Ascending aorta (tissue), 2 donors: ENCODE measurements at regions of chr1 and their contacts with region 1.

Region 1: DNA sequence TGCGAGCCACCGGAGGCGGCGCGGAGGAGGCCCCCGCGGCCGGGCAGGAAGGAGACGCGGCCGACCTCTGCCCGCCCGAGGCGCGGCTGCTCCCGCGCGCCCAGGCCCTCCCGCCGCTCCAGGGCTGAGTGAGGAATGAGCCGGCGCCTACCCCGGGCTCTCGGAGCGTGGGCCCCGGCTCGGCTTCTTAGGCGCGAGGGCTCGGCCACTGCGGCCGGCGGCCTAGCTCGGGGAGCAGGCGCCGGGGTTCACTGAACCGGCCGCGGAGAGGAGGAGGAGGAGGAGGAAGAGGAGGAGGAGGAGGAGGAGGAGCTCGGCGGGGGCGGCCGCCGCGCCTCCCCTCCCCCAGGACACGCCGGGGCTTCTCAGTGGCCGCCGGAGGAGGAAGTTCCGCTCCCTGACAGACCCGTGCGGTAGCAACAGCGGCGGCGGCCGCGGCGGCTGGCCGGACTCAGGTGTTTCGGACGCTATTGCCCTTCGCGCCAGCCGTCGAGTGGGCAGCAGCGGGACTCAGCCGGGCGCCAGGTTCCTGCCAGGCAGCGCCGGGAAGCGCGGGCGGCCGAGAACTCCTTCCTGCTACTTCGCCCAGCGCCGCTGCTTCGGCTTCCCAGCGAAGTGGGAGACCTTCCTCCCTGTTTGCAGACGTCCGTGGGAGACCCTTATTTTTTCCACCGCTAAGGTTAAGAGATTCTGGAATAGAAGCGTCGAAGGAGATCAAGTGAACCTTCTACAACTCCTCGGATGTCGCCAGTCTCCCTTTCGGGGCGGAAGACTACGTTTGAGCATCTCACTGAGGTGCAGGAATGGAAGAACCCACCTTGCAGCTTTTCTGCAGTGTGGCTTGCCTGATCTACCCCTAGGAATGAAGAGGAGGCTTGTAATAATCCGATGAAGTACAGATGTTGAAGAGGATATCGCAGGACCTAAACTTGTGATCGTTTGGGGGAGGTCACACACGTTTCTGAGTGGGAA is at the start of gene MAN1A2:
- DNase-seq: peak; percentile 59 to 91
- H3K4me3 ChIP-seq: peak within 1 kb of the TSS; percentile 84 to 86
- H3K27ac ChIP-seq: peak within 1 kb of the TSS; percentile 97 to 98
- H3K4me1 ChIP-seq: peaks cover 7 to 14% of the 10 kb centered on the region in 2 donors
- H3K27me3 ChIP-seq: no peaks in the 10 kb centered on the region
- CTCF ChIP-seq: no peak
- total RNA-seq, gene MAN1A2: 25.4 TPM

Region 2: DNA sequence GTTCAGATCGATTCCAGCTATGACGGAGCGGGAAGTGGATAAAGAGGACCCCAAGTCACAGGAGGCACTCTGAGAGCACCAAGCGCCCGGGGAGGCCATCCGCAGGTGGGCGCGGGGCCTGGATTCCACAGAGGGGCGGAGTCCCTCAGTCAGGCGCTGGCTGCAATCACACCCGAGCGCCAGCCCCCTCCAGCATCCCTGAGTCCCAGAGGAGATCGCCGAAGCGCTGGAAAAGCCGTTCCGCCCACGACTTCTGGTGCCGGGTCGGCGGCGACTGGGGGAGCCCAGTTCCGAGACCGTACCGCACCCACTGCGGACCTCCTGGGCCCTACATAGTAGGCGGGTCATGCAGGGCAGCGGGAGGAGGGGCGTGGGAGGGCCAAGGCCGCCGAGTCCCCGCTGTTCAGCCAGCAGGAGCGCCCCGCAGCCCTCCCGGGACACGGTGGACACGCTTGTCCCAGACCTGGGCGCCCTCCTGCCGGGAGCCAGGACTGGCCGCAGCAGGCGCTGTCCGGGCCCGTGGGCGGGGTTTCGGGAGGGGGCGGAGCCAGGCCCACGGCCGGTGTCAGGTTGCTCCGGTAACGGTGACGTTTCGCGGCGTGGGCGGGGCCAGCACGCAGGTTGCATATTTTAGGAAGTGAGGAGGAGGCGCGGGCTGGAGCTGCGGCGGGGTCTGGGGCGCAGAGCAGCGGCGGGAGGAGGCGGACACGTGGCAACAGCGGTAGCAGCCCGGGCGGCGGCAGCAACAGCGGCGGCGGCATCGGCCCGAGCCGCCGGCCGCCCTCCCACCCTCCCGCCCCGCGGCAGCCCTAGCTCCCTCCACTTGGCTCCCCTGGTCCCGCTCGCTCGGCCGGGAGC is 994.5 kb before region 1 on chr1 and contains the start of gene ATP1A1:
- intact Hi-C with region 1: loop called (anchors 5 kb)
- DNase-seq: peak; percentile 94 to 98
- H3K4me3 ChIP-seq: peak within 1 kb of the TSS; percentile 78 to 81
- H3K27ac ChIP-seq: peak within 1 kb of the TSS; percentile 95 to 96
- H3K4me1 ChIP-seq: peaks cover 17 to 36% of the 10 kb centered on the region in 2 donors
- H3K27me3 ChIP-seq: no peaks in the 10 kb centered on the region
- CTCF ChIP-seq: no peak
- total RNA-seq, gene ATP1A1: 255 TPM

Region 3: GRCh38 chr1:117059678-117060440 is 307.5 kb before region 1 on chr1 and contains the start of gene TTF2:
- intact Hi-C with region 1: loop called (anchors 2 kb)
- DNase-seq: peak; percentile 92 to 97
- H3K4me3 ChIP-seq: peak within 1 kb of the TSS; percentile 77 to 79
- H3K27ac ChIP-seq: peak within 1 kb of the TSS; percentile 39 to 53
- H3K4me1 ChIP-seq: peaks cover 0 to 6% of the 10 kb centered on the region in 2 donors
- H3K27me3 ChIP-seq: no peaks in the 10 kb centered on the region
- CTCF ChIP-seq: peak in 1 of 3 experiments; percentile 23
- total RNA-seq, gene TTF2: 4.4 TPM

Region 4: DNA sequence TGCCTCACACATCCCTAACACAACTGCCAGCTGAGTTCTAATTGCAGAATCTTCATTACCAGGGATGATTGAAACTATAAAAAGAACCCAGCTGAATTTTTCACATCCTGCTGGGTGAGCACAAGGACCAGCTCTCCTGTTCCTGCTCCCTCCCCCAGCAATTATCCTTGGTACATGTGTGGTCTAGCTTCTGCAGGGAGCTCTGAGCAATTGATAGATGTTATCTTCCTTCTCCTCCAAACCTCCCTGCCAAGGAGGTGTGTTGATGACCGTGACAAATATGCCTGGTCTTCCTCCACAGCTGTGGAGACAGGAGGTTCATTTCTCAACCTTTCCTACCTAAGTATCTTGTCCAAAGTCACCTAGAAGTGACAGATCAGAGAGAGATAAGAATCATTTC is 65.4 kb before region 1 on chr1:
- intact Hi-C with region 1: no loop called
- DNase-seq: no peak
- H3K4me3 ChIP-seq: no peak overlapping the region
- H3K27ac ChIP-seq: no peak overlapping the region
- H3K4me1 ChIP-seq: no peaks in the 10 kb centered on the region
- H3K27me3 ChIP-seq: no peaks in the 10 kb centered on the region
- CTCF ChIP-seq: no peak

Region 5: DNA sequence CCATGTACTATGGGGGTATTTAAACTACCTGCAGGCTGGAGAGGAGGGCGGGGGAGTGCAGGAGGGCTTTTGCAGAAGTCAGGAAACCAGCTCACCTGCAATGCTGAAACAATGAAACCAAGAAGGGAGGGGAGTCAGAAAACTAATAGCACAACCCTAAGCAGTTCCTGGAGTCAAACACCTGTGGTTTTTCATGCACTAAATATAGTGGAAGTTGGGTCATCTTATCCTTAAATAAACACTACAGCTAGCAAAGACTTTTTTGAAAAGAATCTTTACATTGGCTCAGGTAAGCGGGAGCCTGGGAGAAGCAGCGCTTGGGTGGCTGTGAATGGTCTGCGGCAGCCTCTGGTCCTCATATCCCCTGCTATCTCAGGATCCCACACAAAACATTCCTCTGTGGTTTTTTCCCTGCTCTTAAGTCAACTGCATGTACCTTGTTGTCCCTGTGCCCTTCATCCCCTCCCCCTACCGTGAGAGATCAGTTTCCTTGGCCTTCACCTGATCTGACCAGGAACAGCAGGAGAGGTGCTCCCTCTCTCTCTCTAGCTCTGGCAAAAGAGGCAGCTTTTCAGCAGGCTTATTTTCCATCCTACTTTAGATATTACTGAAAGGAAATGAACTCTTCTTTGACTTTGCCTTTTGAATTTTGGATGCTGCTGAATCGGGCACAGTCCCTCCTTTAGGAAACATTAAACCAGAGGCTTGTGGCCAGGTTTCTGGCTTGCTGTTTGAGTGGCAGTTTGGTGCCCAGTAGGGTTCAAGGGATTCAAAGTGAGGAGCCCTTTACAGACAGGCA is 265.1 kb after region 1 on chr1:
- intact Hi-C with region 1: no loop called
- DNase-seq: peak in 1 of 2 donors; percentile 22
- H3K4me3 ChIP-seq: no peak overlapping the region
- H3K27ac ChIP-seq: no peak overlapping the region
- H3K4me1 ChIP-seq: peaks cover 0 to 19% of the 10 kb centered on the region in 2 donors
- H3K27me3 ChIP-seq: no peaks in the 10 kb centered on the region
- CTCF ChIP-seq: no peak

Region 6: DNA sequence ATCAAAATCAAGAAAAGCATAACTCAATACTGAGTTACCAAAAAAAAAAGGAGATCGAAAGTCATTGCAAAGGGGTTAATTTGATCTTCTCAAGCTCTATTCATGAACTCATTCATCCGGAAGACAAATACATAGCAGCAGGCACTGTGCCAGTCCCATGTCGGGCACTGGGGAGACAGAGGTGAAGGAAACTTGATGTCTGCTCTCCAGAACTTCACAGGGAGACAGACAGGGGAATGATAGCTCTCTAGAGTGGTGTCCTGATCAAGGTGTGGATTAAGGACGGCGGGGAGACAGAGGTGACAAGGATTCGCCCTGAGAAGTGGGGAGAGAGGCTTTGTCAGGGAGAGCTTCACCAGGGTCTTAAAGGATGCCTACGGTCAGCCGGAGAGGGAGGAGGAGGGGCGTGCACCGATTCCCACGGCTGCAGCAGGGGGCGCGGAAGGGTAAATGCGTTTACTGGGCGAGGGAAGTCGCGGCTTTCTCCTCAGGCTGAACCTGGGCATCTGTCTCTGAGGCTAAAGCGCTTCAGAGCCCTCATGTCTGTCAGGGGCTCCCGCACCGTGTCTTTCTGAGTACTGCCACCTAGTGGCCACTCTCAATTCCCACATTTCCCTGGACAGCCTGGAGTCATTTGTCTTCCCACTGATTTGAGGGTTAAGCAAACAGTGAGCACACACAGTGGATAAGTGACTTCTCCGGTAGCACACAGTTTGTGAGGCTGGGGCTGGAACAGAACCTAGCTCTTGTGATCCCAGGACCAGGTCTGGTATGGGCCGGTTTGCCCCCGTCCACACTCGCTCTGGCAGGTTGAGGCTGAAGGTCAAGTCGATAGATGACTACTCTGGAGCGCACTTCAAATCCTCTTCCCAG is 391.3 kb after region 1 on chr1:
- intact Hi-C with region 1: loop called (anchors 10 kb)
- DNase-seq: peak in 1 of 2 donors; percentile 82
- H3K4me3 ChIP-seq: peak overlapping the region; percentile 52 to 68
- H3K27ac ChIP-seq: no peak overlapping the region
- H3K4me1 ChIP-seq: no peaks in the 10 kb centered on the region
- H3K27me3 ChIP-seq: no peaks in the 10 kb centered on the region
- CTCF ChIP-seq: peak; percentile 66 to 87 (median 86)

Region 7: DNA sequence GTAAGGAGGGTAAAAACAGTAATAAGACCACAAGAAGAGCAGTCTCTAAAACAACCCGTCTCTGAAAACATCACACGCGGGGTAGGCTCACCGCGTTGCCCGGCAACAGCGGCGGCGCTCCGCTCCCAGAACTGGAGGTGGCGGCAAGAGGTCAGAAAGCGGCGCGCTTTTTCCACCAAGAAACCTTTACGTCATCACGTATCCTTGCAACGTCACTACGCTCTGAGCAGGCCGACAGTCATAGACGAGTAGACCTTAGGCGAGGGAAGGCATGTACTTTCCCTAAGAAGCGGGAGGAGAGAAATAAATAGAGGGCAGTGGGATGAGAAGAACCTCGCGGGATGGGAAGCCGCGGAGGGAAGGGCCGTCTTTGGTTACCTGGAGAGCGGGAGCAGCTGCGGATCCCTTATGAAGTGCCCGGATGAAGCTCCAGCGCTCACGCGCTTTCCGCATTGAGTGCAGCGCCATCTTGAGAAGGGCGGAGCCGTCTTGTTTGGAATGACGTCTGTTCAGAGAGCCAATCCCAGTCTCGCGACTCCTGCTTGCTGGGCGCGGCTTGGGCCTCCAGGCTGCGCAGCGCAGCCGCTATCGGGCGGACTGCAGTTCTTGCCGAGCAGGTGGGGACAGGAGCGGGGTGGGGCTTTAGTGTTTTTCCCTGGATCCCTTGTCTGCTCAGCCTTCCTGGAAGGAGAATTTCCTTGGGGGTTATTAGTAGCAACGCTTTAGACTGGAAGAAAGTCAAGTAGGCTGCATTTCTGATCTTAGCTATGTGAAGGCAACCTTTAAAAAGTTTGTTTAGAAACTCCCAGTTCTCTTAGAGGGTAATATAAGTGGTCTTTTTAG is 1773.1 kb after region 1 on chr1 and contains the start of gene WARS2:
- intact Hi-C with region 1: loop called (anchors 10 kb)
- DNase-seq: peak; percentile 84 to 97
- H3K4me3 ChIP-seq: peak within 1 kb of the TSS; percentile 69 to 74
- H3K27ac ChIP-seq: peak within 1 kb of the TSS; percentile 95 to 98
- H3K4me1 ChIP-seq: peaks cover 4% of the 10 kb centered on the region in 2 donors
- H3K27me3 ChIP-seq: no peaks in the 10 kb centered on the region
- CTCF ChIP-seq: peak in 1 of 3 experiments; percentile 13
- total RNA-seq, gene WARS2: 11.9 TPM